Cardiac septum (tissue), 1 donor: ENCODE measurements at regions of chr2 and their contacts with region 1.

Region 1: DNA sequence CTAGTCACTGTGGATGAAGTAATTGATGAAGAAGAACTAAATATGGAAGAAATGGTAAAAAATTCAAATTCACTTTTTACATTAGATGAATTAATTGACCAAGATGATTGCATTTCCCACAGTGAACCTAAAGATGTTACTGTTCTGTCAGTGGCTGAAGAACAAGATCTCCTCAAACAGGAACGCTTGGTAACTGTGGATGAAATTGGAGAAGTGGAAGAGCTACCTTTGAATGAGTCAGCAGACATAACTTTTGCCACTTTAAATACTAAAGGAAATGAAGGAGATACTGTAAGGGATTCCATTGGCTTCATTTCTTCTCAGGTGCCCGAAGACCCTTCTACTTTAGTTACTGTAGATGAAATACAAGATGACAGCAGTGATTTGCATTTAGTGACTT is 26.6 kb upstream of the DYSF start:
- DNase-seq: no peak

Region 2: GRCh38 chr2:71361631-71362030 is 65.1 kb before region 1 on chr2:
- intact Hi-C with region 1: loop called (anchors 10 kb)
- DNase-seq: no peak

Region 3: DNA sequence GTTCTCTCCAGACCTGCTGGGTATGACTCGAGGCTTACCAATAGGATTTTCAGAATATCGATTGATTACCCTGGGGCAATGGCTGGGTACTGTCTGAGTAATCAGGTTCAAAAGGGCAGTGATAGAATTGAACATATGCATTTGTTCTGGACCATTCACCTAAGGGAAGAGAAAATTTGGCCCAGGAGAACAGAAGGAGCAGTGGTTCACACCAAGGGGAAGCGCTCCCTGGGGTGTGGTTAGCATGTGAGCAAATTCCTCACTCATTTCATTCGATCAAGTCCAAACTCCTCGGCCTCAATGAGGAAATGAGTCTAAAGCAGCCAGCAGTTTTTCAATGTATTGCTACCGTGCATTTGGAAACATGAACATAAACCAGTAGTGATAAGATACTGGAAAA is 665.4 kb after region 1 on chr2:
- intact Hi-C with region 1: no loop called
- DNase-seq: no peak